ENCODE measurements at regions of chr1 and their contacts with region 1.

Region 1: DNA sequence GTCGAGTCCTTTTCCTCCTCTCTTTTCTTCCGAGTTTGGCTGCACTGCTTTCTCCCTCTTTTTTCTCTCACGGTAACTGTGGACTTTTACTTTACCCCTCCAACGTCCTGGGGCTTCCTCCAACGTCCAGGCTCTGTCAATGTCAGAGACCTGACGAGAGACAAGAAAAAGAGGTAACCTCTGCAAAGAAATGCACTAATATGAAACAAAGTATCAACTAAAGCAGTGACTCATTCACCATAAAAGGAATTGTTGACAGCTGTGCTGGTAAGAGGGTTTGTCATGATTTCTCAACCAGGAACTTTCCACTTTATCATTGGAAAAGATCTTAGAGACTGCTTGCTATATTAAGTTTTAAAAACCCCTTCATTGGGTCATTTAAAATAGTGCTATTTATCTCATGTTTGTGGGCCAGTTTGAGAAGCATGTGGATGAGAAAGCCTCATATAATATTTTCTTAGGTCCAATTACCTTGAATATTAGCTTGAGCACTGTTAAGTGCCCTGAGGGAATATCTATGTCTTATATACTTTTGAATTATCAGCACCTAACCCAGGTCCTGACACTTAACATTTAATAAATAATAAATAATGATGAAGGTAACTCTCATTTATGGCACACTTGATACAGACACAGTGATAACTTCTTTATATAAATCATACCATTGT is at the start of gene GBP2:
- DNase-seq: no peak
- ATAC-seq: peak; percentile 75
- H3K4me3 Mint-ChIP-seq: peak within 1 kb of the TSS; percentile 100
- H3K27ac Mint-ChIP-seq: peak within 1 kb of the TSS; percentile 98
- H3K4me1 Mint-ChIP-seq: peaks cover 49% of the 10 kb centered on the region
- H3K27me3 Mint-ChIP-seq: no peaks in the 10 kb centered on the region
- total RNA-seq, gene GBP2: 170 to 179 TPM

Region 2: DNA sequence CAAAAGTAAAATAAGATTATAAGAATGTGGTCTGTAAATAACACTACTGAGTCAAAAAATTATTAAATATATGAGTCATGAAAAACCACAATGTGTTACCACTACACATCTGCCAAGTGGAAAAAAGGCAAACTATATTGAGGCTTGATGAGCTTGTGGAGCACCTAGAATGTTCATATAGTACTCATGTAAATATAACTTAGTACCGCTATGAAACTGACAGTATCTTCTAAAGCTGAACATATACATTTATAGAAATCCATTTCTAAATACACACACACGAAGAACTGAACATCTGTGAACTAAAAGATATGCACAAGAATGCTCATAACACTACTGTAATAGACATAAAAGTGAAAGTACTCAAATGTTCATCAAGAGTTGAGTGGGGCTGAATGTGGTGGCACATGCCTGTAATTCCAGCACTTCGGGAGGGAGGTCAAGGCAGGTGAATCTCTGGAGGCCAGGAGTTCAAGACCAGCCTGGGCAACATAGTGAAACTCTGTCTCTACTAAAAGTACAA is 84.9 kb before region 1 on chr1:
- POLR2A ChIA-PET with region 1: no interaction called
- DNase-seq: no peak
- ATAC-seq: peak; percentile 67
- H3K4me3 Mint-ChIP-seq: no peak overlapping the region
- H3K27ac Mint-ChIP-seq: no peak overlapping the region
- H3K4me1 Mint-ChIP-seq: peaks cover 13% of the 10 kb centered on the region
- H3K27me3 Mint-ChIP-seq: no peaks in the 10 kb centered on the region

Region 3: DNA sequence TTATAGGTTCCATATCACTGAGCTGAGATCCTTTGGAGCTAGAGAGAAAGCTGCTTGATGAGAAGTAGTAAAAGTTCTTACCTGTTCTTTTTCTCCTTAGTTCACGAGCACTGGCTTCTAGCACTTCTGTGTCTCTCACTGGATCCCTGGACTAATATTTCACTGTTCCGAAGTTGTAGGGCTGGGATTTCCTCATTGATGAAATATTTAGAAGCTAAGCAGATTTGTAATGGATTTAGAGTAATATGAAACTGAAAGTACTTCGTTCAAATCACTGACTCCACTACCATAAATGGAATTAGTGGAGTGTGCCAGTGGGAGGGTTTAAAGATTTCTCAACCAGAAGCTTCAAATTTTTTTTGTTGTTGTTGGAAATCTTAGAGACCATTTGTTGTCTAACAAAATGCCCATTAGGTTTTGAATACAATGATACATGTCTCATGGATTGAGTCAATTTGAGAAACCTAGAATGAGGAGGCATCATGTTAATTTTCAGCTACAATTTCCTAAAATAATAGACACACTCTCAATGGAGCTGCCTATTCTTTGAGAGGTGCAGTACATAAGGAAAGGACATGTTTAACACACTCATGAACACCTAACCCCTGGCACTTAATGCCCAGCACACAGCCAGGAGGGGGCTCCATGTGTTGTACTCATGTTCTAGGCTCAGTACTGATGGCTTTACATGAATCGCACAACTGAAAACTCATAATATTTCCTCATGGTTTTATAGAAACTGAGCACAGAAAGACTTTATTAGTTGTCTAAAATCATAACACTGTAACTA is 60.8 kb before region 1 on chr1 and contains the start of gene GBP1:
- POLR2A ChIA-PET with region 1: interaction called, 36 read pairs
- DNase-seq: no peak
- ATAC-seq: peak; percentile 81
- H3K4me3 Mint-ChIP-seq: peak within 1 kb of the TSS; percentile 92
- H3K27ac Mint-ChIP-seq: peak within 1 kb of the TSS; percentile 94
- H3K4me1 Mint-ChIP-seq: peaks cover 45% of the 10 kb centered on the region
- H3K27me3 Mint-ChIP-seq: no peaks in the 10 kb centered on the region
- total RNA-seq, gene GBP1: 150 to 160 TPM

Region 4: DNA sequence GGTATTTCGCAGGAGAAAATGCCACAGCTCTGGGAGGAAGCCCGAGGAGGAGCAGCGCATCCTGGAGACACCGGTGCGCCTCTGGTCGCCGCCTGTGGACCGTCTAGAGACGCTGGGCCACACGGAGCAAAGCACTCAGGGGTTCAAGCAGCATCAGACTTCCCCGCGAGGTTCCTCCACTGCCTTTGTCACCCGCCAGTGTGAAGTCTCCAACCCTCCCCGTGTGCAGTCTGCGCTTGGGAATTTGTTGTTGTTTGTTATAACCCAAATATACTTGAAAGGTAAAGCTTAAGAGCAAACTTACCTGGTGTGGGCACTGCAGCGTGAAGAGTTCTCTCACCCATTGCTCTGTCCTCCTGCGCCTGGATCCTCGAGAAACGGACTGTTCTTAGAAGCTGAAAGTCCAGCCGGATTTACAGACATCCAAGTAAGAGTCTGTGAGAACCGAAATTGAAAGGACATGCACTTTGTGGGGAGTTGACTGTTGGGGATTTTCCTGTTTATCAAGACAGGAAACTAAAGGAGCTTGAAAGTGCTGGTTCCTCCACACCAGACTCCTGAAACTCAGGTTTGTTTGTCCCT is 72.5 kb after region 1 on chr1 and contains the start of gene GBP4:
- POLR2A ChIA-PET with region 1: interaction called, 66 read pairs
- DNase-seq: peak; percentile 62
- ATAC-seq: peak; percentile 82
- H3K4me3 Mint-ChIP-seq: peak within 1 kb of the TSS; percentile 94
- H3K27ac Mint-ChIP-seq: peak within 1 kb of the TSS; percentile 94
- H3K4me1 Mint-ChIP-seq: peaks cover 49% of the 10 kb centered on the region
- H3K27me3 Mint-ChIP-seq: no peaks in the 10 kb centered on the region
- total RNA-seq, gene GBP4: 61.9 to 69.7 TPM

Region 5: GRCh38 chr1:89274411-89274857 is 148.4 kb after region 1 on chr1:
- POLR2A ChIA-PET with region 1: interaction called, 109 read pairs
- DNase-seq: no peak
- ATAC-seq: peak; percentile 13
- H3K4me3 Mint-ChIP-seq: peak overlapping the region; percentile 86
- H3K27ac Mint-ChIP-seq: peak overlapping the region; percentile 98
- H3K4me1 Mint-ChIP-seq: peaks cover 55% of the 10 kb centered on the region
- H3K27me3 Mint-ChIP-seq: no peaks in the 10 kb centered on the region

Region 6: DNA sequence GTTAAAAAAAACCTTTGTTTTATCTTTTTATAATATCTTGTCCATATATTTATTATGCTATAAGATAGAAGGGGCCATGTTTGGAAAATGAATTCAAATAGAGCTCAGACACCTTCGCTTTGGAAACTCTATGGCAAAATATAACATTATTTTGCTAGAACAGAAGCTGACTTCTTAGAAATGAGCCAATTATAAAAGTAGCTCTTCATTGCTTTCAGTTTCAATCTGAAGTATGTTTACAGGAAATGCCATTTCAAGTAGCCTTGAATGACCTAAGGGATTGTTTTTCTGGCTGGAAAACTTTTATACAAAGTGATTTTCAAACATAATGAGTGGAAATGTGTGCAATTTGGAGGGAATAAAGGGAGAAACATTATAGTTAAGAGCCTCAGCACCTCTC is 184.5 kb after region 1 on chr1:
- POLR2A ChIA-PET with region 1: interaction called, 11 read pairs
- DNase-seq: no peak
- ATAC-seq: peak; percentile 75
- H3K4me3 Mint-ChIP-seq: peak overlapping the region; percentile 60
- H3K27ac Mint-ChIP-seq: peak overlapping the region; percentile 90
- H3K4me1 Mint-ChIP-seq: peaks cover 39% of the 10 kb centered on the region
- H3K27me3 Mint-ChIP-seq: no peaks in the 10 kb centered on the region